Vagina (tissue), 2 donors: ENCODE measurements at regions of chr16 and their contacts with region 1.

Region 1: GRCh38 chr16:81608518-81609209 is 164.1 kb downstream of the CMIP start:
- DNase-seq: no peak
- H3K4me3 ChIP-seq: no peak overlapping the region
- H3K27ac ChIP-seq: peak overlapping the region; percentile 77
- H3K4me1 ChIP-seq: peaks cover 74% of the 10 kb centered on the region
- H3K27me3 ChIP-seq: no peaks in the 10 kb centered on the region
- CTCF ChIP-seq: no peak
- POLR2A ChIP-seq: no peak

Region 2: GRCh38 chr16:81095953-81096717 is 512.5 kb before region 1 on chr16 and contains the start of gene GCSH:
- intact Hi-C with region 1: no loop called
- DNase-seq: peak; percentile 98 to 99
- H3K4me3 ChIP-seq: peak within 1 kb of the TSS; percentile 78 to 89
- H3K27ac ChIP-seq: peak within 1 kb of the TSS; percentile 73
- H3K4me1 ChIP-seq: peaks cover 8% of the 10 kb centered on the region
- H3K27me3 ChIP-seq: no peaks in the 10 kb centered on the region
- CTCF ChIP-seq: no peak
- POLR2A ChIP-seq: no peak
- total RNA-seq, gene GCSH: 27.0 TPM

Region 3: GRCh38 chr16:81444448-81445121 is 164.1 kb before region 1 on chr16 and contains the start of gene CMIP:
- intact Hi-C with region 1: loop called (anchors 5 kb)
- DNase-seq: no peak
- H3K4me3 ChIP-seq: peak within 1 kb of the TSS; percentile 87 to 97
- H3K27ac ChIP-seq: peak within 1 kb of the TSS; percentile 93
- H3K4me1 ChIP-seq: peaks cover 33% of the 10 kb centered on the region
- H3K27me3 ChIP-seq: no peaks in the 10 kb centered on the region
- CTCF ChIP-seq: no peak
- POLR2A ChIP-seq: peak in 1 of 2 donors; percentile 31
- total RNA-seq, gene CMIP: 66.3 TPM

Region 4: GRCh38 chr16:81521151-81521626 is 87.5 kb before region 1 on chr16:
- intact Hi-C with region 1: no loop called
- DNase-seq: no peak
- H3K4me3 ChIP-seq: no peak overlapping the region
- H3K27ac ChIP-seq: no peak overlapping the region
- H3K4me1 ChIP-seq: peaks cover 54% of the 10 kb centered on the region
- H3K27me3 ChIP-seq: no peaks in the 10 kb centered on the region
- CTCF ChIP-seq: no peak
- POLR2A ChIP-seq: no peak

Region 5: DNA sequence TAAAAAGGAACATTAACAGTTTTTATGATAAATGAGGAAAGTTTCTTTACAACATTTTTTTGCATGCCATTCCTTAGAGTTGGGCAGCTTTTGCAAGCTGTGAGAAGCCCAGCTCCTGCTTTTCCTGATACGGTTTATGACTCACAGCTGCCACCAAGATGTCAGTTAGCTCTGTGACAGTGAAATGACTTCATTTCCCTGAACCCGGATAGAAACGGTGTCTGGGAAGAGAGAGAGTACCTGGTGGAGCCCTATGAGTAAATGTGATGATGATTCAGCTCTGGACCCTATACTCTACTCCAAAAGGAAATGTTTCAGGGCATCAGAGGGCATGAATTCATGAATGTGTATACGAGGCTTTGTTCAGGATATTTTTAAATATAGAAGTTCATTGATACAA is 1832.9 kb after region 1 on chr16:
- intact Hi-C with region 1: no loop called
- DNase-seq: no peak
- H3K4me3 ChIP-seq: no peak overlapping the region
- H3K27ac ChIP-seq: no peak overlapping the region
- H3K4me1 ChIP-seq: no peaks in the 10 kb centered on the region
- H3K27me3 ChIP-seq: no peaks in the 10 kb centered on the region
- CTCF ChIP-seq: no peak
- POLR2A ChIP-seq: no peak